Uterus (tissue), 4 donors: ENCODE measurements at regions of chr1 and their contacts with region 1.

Region 1: GRCh38 chr1:115469703-115470476 is 131.8 kb upstream of the NGF start:
- DNase-seq: peak; percentile 38 to 47
- H3K4me3 ChIP-seq: no peak overlapping the region
- H3K27ac ChIP-seq: no peak overlapping the region
- H3K4me1 ChIP-seq: no peaks in the 10 kb centered on the region
- H3K27me3 ChIP-seq: no peaks in the 10 kb centered on the region
- CTCF ChIP-seq: peak; percentile 68 to 79 (median 75)
- POLR2A ChIP-seq: no peak

Region 2: DNA sequence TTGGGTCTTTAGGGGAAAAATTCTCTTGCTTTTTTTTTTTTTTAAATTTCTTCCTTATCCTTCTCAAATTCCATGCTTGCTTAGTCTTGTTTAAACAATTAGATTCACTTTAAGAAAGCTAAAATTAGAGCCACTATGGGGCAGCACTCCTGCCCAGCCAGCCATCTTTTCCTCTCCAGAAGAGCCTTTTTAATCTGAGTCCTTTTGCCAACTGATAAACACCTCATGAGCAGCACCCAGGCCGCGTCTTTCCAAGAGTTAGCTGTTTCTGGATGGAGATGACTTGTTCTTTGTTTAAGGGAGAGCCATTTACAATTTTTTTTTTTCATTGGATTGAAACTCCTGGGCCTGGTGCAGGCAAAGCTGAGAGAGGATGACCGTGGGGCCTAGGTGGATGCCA is 327.3 kb before region 1 on chr1:
- intact Hi-C with region 1: loop called (anchors 10 kb)
- DNase-seq: no peak
- H3K4me3 ChIP-seq: no peak overlapping the region
- H3K27ac ChIP-seq: no peak overlapping the region
- H3K4me1 ChIP-seq: no peaks in the 10 kb centered on the region
- H3K27me3 ChIP-seq: no peaks in the 10 kb centered on the region
- CTCF ChIP-seq: peak in 1 of 4 experiments; percentile 14
- POLR2A ChIP-seq: no peak